Activated CD4-positive, alpha-beta T cell treated with anti-CD3 and anti-CD28 coated beads, Interleukin-2, amount 10 ng/mL, durations not matched to agents 24 days and 14 days (primary cell): ENCODE measurements at regions of chr3 and their contacts with region 1.

Region 1: GRCh38 chr3:39361252-39361927 is 21.8 kb upstream of the SLC25A38 start:
- DNase-seq: peak; percentile 90
- H3K4me3 Mint-ChIP-seq: peak overlapping the region; percentile 80
- H3K27ac Mint-ChIP-seq: peak overlapping the region; percentile 93
- H3K4me1 Mint-ChIP-seq: peaks cover 63% of the 10 kb centered on the region
- H3K27me3 Mint-ChIP-seq: peaks cover 9% of the 10 kb centered on the region

Region 2: GRCh38 chr3:39135170-39135805 is 226.1 kb before region 1 on chr3:
- intact Hi-C with region 1: no loop called
- DNase-seq: no peak
- H3K4me3 Mint-ChIP-seq: no peak overlapping the region
- H3K27ac Mint-ChIP-seq: no peak overlapping the region
- H3K4me1 Mint-ChIP-seq: peaks cover 16% of the 10 kb centered on the region
- H3K27me3 Mint-ChIP-seq: no peaks in the 10 kb centered on the region

Region 3: DNA sequence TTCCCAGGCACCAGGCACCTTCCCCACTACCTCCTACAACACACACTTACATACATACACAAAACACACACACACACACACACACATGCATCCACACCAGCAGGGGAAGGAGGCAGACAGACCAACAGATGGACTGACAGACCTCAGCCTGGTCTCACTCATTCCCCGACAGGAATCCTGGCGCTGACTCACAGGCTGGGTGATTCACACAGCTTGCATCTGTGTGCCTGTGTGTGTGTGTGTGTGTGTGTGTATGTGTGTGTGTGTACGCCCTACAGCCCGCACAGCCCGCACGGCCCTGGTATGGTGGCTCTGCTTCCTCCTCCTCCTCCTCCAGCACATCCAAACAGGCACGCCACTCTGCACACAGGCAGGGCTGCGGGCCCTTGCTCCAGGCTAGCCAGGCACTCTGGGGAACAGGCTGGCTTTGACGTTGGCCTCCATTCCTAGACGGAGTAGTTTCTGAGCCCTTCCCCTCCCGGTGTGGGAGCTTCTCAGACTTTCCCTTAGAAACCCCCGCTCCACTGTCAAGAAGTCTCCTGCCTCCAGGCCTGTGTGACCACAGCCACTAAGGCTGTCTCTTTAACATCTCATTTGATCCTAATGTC is 214.3 kb before region 1 on chr3:
- intact Hi-C with region 1: no loop called
- DNase-seq: peak; percentile 89
- H3K4me3 Mint-ChIP-seq: peak overlapping the region; percentile 96
- H3K27ac Mint-ChIP-seq: peak overlapping the region; percentile 100
- H3K4me1 Mint-ChIP-seq: peaks cover 73% of the 10 kb centered on the region
- H3K27me3 Mint-ChIP-seq: no peaks in the 10 kb centered on the region

Region 4: DNA sequence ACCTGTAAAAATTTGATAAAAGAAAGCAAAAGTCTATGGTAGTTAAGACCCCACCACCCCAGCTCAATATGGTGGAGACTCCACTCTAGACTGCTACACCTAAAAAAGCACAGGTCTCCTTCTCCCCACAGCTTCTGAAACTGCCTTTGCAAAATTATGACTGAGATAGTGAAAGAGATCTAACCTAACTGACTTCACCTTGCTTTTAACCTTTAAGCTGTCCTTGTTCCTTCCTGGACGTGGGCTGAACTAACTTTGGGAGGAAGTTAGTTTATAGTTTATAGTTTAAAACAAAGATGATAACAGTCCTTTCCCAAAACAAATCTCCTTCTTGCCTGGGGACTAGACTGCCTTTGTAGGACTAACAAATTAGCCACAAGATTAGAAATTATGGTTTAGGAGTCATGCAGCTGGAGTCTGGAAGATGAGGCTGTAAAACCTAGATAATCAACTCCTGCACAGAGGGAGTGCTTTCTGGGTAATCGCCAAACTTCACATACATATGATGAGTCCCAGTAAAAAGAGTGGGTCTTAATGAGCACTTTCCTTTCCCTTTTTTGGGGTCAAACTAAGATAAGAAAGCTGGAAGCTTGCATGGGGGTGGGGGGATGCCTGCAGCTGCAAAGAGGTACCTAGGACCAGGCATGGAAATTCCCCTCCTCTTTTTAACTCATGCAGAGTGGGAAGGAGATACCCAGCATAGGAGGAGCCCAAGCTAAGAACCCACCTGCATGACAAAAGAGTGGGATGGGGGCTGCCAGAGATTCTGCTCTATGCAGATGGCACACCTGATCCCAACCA is 14.4 kb before region 1 on chr3:
- intact Hi-C with region 1: loop called (anchors 1 kb)
- DNase-seq: peak; percentile 70
- H3K4me3 Mint-ChIP-seq: peak overlapping the region; percentile 70
- H3K27ac Mint-ChIP-seq: peak overlapping the region; percentile 79
- H3K4me1 Mint-ChIP-seq: peaks cover 49% of the 10 kb centered on the region
- H3K27me3 Mint-ChIP-seq: no peaks in the 10 kb centered on the region

Region 5: DNA sequence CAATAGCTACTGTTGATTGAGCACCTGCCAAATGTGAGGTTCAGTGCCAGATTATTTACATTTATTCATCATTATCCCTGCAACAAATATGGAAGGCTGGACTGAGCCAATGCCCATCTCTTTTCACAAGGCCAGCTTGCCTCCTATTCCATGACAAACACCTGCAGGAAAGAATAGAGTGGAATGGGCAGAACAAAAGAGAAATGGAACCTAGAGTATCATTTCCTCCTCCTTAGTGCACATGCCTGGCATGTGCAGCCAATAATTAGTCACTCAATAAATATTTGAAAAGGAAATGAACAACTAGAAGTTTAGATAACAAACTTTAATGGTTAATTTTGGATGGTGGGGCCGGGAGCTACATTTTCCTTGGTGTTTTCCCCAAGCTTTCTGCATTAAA is 386.6 kb after region 1 on chr3:
- intact Hi-C with region 1: no loop called
- DNase-seq: no peak
- H3K4me3 Mint-ChIP-seq: no peak overlapping the region
- H3K27ac Mint-ChIP-seq: no peak overlapping the region
- H3K4me1 Mint-ChIP-seq: no peaks in the 10 kb centered on the region
- H3K27me3 Mint-ChIP-seq: no peaks in the 10 kb centered on the region